H1 (cell line): ENCODE measurements at regions of chr16 and their contacts with region 1.

Region 1: DNA sequence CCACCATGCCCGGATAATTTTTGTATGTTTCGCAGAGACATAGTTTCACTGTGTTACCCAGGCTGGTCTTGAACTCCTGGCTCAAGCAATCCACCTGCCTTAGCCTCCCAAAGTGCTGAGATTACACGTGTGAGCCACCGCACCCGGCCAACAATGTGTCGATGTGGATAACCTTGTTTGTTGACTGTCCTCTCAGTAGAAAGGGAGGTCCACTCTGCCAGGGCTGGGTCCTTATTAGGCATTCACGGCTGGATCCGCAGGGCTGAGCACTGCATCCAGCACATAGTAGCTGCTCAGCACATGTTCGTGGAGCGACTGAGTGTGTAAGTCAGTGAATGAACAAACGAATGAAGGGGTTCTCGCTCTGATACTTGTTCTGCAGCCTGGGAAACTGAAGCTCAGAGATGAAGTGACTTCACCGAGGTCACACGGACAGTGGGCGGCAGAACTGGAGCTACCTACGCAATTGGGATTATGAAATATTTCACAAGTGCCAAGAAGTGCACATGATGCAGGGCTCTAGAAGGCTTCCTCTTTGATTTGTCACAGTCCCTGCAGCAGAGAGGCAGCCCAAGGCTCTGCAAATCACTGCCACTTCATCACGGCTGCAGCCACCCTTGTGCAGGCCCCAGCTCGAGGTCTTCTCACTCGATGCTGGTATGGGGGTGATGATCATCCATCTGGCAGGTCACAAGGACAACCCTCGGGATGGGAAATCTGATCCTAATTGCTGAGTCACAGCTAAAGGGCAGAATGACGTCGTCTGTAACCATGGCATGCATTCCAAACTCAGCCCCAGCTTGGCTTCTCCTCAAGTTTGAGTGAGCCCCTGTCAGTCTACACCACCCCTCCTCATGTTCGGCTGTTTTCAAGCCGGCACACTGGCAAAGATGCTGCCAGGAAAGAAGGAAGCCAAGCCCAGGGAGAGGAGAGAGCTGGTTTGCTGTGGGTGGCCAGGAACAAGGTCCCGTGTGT is 28.0 kb upstream of the SNN start:
- DNase-seq: no peak
- H3K4me3 ChIP-seq: no peak overlapping the region
- H3K27ac ChIP-seq: peak overlapping the region; percentile 15; the same call in 1 of the 2 replicates
- H3K4me1 ChIP-seq: peaks cover 0 to 25% (median 19%) of the 10 kb centered on the region in 4 experiments; a peak in 6 of 7 replicates
- H3K27me3 ChIP-seq: no peaks in the 10 kb centered on the region
- CTCF ChIP-seq: peak in 1 of 3 experiments; percentile 2; a peak in 1 of 4 replicates
- EP300 ChIP-seq: no peak
- POLR2A ChIP-seq: no peak; a peak in 1 of 3 replicates
- RAD21 ChIP-seq: no peak

Region 2: GRCh38 chr16:11530171-11530940 is 109.9 kb before region 1 on chr16:
- CTCF ChIA-PET with region 1: interaction called, 51 read pairs
- POLR2A ChIA-PET with region 1: interaction called, 6 read pairs
- DNase-seq: no peak
- H3K4me3 ChIP-seq: no peak overlapping the region
- H3K27ac ChIP-seq: no peak overlapping the region
- H3K4me1 ChIP-seq: peaks cover 0 to 10% (median 3%) of the 10 kb centered on the region in 4 experiments; a peak in 4 of 7 replicates
- H3K27me3 ChIP-seq: no peaks in the 10 kb centered on the region
- CTCF ChIP-seq: no peak
- EP300 ChIP-seq: no peak
- POLR2A ChIP-seq: no peak
- RAD21 ChIP-seq: no peak

Region 3: DNA sequence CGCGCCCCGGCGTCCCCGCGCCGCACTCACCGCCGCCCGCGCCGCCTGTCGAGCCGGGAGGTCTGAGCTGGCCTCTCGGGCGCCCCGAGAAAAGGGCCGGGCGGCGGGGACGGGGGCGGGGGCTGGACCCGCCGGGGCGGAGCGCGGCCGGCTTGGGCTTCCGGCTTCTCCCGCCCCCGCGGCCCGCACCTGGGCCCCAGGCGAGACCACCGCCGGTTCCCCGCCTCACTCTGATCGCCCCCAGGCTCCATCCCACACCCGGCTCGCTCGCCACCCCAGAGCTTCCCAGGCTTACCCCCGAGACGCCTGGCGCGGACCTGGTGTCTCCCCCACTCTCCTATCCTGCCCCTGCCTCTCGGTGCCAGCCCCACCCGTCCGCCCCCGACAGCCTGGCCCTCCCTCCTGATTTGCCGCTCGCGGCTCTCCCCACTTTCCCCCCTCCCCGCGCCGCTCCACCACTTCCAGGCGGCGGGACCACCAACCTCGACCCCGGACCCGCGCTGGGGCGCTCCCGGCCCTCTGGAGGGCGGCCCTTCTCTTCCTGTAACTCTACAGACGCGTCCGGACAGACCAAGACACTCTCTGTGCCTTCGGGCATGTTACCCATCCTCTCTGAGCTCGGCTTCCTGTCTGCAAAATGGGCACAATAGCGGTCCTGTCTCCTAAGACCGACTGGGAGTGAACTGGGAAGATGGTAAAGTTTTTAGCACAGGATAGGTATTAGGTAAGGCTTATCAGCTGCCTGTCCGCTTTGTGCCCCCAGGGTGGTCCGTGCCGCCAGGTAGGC is 53.2 kb before region 1 on chr16 and contains the start of gene LITAF:
- CTCF ChIA-PET with region 1: interaction called, 18 read pairs
- POLR2A ChIA-PET with region 1: interaction called, 12 read pairs
- DNase-seq: peak; percentile 9 to 79
- H3K4me3 ChIP-seq: peak within 1 kb of the TSS; percentile 49 to 87 (median 63)
- H3K27ac ChIP-seq: no peak within 1 kb of the TSS; the same call in 1 of the 2 replicates
- H3K4me1 ChIP-seq: peaks cover 12 to 29% (median 25%) of the 10 kb centered on the region in 4 experiments
- H3K27me3 ChIP-seq: peaks cover 4 to 21% (median 13%) of the 10 kb centered on the region in 4 experiments
- CTCF ChIP-seq: peak in 1 of 3 experiments; percentile 22; a peak in 1 of 4 replicates
- EP300 ChIP-seq: no peak
- POLR2A ChIP-seq: no peak
- RAD21 ChIP-seq: peak; percentile 46 to 49; a peak in 3 of 4 replicates
- total RNA-seq, gene LITAF: 160 and 165 TPM in 2 replicates

Region 4: GRCh38 chr16:11619327-11619851 is 20.8 kb before region 1 on chr16:
- CTCF ChIA-PET with region 1: interaction called, 15 read pairs
- POLR2A ChIA-PET with region 1: interaction called, 18 read pairs
- DNase-seq: no peak
- H3K4me3 ChIP-seq: no peak overlapping the region
- H3K27ac ChIP-seq: no peak overlapping the region
- H3K4me1 ChIP-seq: peaks cover 5 to 15% (median 7%) of the 10 kb centered on the region in 4 experiments
- H3K27me3 ChIP-seq: no peaks in the 10 kb centered on the region
- CTCF ChIP-seq: no peak
- EP300 ChIP-seq: no peak
- POLR2A ChIP-seq: no peak
- RAD21 ChIP-seq: no peak

Region 5: DNA sequence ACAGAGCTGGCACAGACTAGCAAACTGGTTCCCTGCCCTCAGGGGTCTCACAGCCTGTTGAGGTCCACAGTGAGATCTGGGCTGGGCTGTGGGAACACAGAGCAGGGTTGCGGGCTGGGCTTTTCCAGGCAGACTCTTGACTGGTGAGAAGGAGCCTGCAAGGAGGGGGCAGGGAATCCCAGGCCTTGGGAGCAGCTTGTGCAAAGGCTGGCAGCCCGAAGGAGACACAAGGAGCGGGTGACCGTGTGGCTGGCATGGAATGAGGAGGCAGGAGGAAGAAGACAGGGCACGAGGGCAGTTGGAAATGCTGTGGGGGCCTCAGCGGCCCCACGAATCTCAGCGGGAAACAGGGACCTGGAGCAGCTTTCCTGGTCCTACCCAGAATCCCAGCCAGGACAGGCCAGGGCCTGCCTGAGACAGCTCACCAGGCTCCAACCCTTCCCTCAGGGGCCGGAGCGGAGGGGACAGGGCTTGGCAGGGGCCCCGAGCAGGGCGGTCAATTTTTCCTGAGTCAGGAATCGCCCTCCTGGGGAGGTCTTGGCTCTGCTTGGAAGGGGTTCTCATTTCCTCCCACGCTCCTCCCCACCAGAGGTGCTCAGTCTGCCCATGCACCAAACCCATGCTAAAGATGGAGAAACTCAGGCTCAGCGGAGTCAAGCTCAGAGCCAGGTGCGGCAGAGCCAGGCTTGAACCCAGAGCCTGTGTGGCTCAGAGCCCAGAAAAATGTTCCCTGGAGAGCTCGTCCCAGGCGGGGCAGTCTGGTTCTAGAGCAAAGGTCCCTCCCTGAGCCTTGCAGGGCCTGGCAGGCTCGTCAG is 18.9 kb after region 1 on chr16:
- CTCF ChIA-PET with region 1: interaction called, 31 read pairs
- POLR2A ChIA-PET with region 1: interaction called, 6 read pairs
- DNase-seq: peak in 1 of 2 experiments; percentile 54
- H3K4me3 ChIP-seq: no peak overlapping the region
- H3K27ac ChIP-seq: no peak overlapping the region; the same call in 1 of the 2 replicates
- H3K4me1 ChIP-seq: peaks cover 0 to 8% (median 6%) of the 10 kb centered on the region in 4 experiments; a peak in 5 of 7 replicates
- H3K27me3 ChIP-seq: no peaks in the 10 kb centered on the region
- CTCF ChIP-seq: no peak
- EP300 ChIP-seq: no peak
- POLR2A ChIP-seq: no peak
- RAD21 ChIP-seq: no peak

Region 6: GRCh38 chr16:11806721-11807120 is 166.5 kb after region 1 on chr16:
- CTCF ChIA-PET with region 1: no interaction called
- POLR2A ChIA-PET with region 1: no interaction called
- DNase-seq: no peak
- H3K4me3 ChIP-seq: no peak overlapping the region
- H3K27ac ChIP-seq: no peak overlapping the region
- H3K4me1 ChIP-seq: peaks cover 0 to 3% (median 0%) of the 10 kb centered on the region in 4 experiments; a peak in 1 of 7 replicates
- H3K27me3 ChIP-seq: no peaks in the 10 kb centered on the region
- CTCF ChIP-seq: no peak
- EP300 ChIP-seq: no peak
- POLR2A ChIP-seq: no peak
- RAD21 ChIP-seq: no peak